Activated T-helper 1 cell treated with anti-CD3 and anti-CD28 coated beads, Interleukin-12 subunit alpha, Interleukin-12 subunit beta, Interleukin-2, Interleukin-4 antibody, amounts not matched to agents 30 ng/mL and 10 ng/mL and 1 ng/mL, durations not matched to agents 14 hours and 24 hours and 36 hours (primary cell): ENCODE measurements at regions of chr6 and their contacts with region 1.

Region 1: DNA sequence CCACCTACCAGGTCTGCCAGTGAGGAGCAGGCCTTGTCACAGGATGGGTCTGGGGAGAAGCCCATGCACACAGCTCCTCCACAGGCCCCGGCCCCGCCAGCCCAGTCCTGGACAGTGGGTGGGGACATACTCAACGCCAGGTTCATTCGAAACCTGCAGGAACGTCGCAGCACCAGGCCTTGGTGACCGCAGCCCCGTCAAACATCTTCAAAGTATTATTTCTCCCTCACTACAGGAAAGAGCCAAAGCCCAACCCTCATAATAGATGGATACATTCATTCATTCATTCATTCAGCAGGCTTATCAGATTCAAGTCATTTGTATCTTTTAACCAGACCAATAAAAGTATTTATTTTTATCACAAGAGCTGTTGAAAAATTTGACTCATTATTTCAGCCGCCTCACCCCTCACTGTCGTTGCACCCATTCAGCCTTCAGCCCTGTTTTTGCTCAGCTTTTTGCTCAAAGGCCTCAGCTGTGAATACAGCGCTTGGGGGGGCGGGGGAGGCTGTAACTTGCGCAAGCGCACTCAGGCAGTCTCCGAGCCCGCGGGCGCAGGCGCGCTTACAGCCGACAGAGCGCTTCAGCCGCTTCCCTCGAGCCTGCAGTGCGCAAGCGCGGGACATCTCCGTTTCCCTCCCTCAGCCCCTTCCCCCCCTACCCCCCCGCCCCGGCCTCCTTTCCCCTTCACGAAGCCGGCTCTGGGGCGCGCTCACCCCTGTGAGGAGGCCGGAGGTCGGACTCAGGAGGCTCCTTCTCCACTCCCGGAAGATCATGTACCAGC is at the start of gene C6orf136:
- DNase-seq: peak; percentile 89
- H3K4me3 Mint-ChIP-seq: peak within 1 kb of the TSS; percentile 90
- H3K27ac Mint-ChIP-seq: peak within 1 kb of the TSS; percentile 91
- H3K4me1 Mint-ChIP-seq: peaks cover 23% of the 10 kb centered on the region
- H3K27me3 Mint-ChIP-seq: no peaks in the 10 kb centered on the region
- total RNA-seq, gene C6orf136: 23.9 and 36.0 TPM in 2 replicates

Region 2: DNA sequence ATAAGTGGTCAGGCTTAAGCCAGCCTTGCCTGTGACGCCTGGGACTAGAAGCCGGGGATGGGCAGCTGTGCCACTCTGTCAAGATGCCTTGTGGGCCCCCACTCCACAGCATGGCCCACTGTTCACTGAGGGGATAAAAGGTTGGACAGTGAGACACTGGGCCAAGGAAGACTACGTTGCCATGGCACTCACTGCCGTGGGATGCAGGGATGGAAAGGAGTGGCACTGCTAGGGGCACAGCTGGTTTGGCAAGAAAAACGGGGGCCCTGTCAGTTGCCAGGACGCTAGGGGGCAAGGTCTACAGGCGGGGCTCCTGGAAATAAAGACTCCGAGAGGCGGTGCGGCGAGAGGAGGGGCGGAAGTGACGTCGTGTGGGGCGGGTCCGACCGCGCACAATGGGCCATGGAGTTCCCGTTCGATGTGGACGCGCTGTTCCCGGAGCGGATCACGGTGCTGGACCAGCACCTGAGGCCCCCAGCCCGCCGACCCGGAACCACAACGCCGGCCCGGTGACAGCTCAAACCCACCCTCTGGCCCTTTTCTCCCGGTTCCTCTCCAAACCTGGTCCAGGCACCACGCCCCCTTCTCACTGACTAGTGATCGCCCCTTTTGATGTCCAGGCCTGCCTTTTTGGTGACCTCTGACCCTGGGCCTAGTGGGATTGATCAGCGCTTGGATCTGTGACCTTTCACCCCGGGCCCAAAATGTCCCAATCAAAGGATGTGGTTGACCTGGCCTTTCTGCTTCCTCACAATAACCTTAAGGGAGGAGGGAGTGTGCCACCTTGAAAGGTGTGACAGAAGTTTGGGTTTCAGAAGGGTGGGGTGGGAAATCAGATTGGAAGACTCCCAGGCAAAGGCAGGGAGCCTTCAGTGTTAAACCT is 19.9 kb before region 1 on chr6 and contains the start of gene ATAT1:
- intact Hi-C with region 1: loop called (anchors 1 kb)
- DNase-seq: peak; percentile 84
- H3K4me3 Mint-ChIP-seq: peak within 1 kb of the TSS; percentile 91
- H3K27ac Mint-ChIP-seq: peak within 1 kb of the TSS; percentile 95
- H3K4me1 Mint-ChIP-seq: peaks cover 27% of the 10 kb centered on the region
- H3K27me3 Mint-ChIP-seq: no peaks in the 10 kb centered on the region
- total RNA-seq, gene ATAT1: 11.6 and 13.4 TPM in 2 replicates

Region 3: GRCh38 chr6:30686908-30687658 is 40.4 kb after region 1 on chr6:
- intact Hi-C with region 1: loop called (anchors 1 kb)
- DNase-seq: peak; percentile 83
- H3K4me3 Mint-ChIP-seq: peak overlapping the region; percentile 94
- H3K27ac Mint-ChIP-seq: peak overlapping the region; percentile 87
- H3K4me1 Mint-ChIP-seq: peaks cover 50% of the 10 kb centered on the region
- H3K27me3 Mint-ChIP-seq: no peaks in the 10 kb centered on the region